A673 (cell line): ENCODE measurements at regions of chr17 and their contacts with region 1.

Region 1: DNA sequence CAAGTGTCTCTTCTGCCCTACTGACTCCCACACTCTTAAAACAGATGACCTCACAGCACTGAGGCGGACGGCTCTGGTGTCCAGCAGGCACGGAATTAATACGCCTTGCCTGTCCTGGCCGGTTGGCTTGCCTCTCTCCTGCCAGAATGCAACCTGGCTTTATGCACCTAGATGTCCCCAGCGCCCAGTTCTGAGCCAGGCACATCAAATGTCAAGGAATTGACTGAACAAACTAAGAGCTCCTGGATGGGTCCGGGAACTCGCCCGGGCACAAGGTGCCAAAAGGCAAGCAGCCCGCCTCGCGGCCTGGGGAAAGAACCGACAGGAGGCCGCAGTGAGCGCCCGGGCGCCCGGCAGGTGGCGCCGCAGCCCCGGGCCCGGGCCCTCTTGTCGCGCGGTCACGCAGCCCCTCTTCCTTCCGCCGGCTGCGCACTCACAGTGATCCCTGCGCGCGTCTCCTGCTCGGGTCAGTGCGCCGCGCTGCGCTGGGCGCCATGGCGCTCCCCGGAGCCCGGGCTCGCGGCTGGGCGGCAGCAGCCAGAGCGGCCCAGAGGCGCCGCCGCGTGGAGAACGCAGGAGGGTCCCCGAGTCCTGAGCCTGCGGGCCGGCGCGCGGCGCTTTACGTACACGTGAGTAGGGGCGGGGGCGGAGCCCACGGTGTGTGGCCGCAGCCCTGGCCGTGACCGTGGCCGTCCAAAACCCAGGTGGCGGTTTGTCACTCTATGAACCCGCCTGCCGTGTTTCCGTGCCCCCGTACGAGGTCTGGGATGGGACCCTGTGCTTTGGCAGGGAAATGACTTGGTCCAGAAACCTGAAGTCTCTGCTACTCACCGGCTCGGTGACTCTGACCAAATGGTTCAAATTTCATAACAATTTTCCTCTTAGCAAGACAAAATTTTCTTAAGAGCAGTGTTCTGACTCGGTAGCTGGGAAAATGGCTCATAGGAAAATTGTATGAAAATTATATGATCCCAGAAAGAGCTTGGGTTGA is at the start of gene RSAD1:
- DNase-seq: peak; percentile 94
- H3K4me3 ChIP-seq: peak within 1 kb of the TSS; percentile 65
- H3K27ac ChIP-seq: peak within 1 kb of the TSS; percentile 71
- H3K4me1 ChIP-seq: peaks cover 8% of the 10 kb centered on the region
- H3K27me3 ChIP-seq: no peaks in the 10 kb centered on the region
- CTCF ChIP-seq: peak; percentile 67
- total RNA-seq, gene RSAD1: 44.3 and 48.4 TPM in 2 replicates

Region 2: DNA sequence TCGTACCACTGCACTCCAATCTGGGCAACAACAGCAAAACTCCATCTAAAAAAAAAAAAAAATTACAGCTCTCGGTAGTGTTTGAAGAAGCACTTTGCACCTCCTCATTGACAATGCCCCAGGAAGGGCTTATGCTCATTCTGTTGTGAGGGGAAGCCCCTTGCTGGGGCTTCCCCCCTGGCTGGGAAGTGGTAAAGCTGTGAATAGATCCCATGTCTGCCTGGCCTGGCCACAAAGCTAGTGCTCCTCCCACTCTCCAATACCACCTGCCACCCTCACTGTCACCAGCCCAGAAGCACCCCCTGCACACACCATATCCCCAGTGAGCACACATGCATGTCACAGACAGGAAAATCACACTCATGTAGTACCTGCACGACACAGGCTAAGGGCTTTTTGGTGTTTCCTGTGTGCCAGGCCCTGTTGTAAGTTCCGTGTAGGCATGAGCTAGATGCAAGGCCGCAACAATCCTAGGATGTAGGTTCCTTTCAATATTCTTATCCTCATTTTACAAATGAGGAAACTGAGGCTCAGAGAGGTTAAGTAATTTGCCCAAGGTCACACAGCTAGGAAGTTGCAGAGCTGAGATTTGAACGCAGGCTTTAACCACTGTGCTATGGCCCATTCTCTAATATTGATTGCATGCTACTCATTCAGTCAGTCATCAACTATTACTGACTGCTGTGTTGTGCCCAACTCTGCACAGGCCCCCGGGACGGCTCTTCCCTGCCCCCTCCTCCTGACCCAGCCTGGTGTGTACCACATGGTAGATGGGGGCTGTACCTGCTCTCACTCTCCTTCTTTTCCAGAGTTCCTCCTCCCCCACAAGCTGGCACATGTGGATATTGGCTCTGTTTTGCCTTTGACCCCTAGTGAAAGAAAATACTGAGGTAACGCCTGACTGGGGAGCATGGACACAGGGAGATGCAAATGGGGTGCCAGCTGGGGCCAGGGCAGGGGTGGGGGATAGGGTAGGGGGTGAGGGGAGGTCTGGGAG is 265.4 kb before region 1 on chr17:
- CTCF ChIA-PET with region 1: no interaction called
- POLR2A ChIA-PET with region 1: no interaction called
- intact Hi-C with region 1: no loop called
- DNase-seq: peak; percentile 49
- H3K4me3 ChIP-seq: no peak overlapping the region
- H3K27ac ChIP-seq: no peak overlapping the region
- H3K4me1 ChIP-seq: peaks cover 23% of the 10 kb centered on the region
- H3K27me3 ChIP-seq: no peaks in the 10 kb centered on the region
- CTCF ChIP-seq: peak; percentile 39

Region 3: GRCh38 chr17:50252781-50253180 is 225.9 kb before region 1 on chr17:
- CTCF ChIA-PET with region 1: no interaction called
- POLR2A ChIA-PET with region 1: no interaction called
- intact Hi-C with region 1: no loop called
- DNase-seq: no peak
- H3K4me3 ChIP-seq: no peak overlapping the region
- H3K27ac ChIP-seq: no peak overlapping the region
- H3K4me1 ChIP-seq: no peaks in the 10 kb centered on the region
- H3K27me3 ChIP-seq: no peaks in the 10 kb centered on the region
- CTCF ChIP-seq: no peak

Region 4: GRCh38 chr17:50372758-50373556 is 105.7 kb before region 1 on chr17 and contains the starts of genes EME1 and MRPL27:
- CTCF ChIA-PET with region 1: no interaction called
- POLR2A ChIA-PET with region 1: no interaction called
- intact Hi-C with region 1: loop called (anchors 10 kb)
- DNase-seq: peak; percentile 94
- H3K4me3 ChIP-seq: peak within 1 kb of the TSS; percentile 77
- H3K27ac ChIP-seq: peak within 1 kb of the TSS; percentile 96
- H3K4me1 ChIP-seq: peaks cover 5% of the 10 kb centered on the region
- H3K27me3 ChIP-seq: no peaks in the 10 kb centered on the region
- CTCF ChIP-seq: no peak
- total RNA-seq, gene EME1: 31.9 and 44.0 TPM in 2 replicates
- total RNA-seq, gene MRPL27: 85.6 and 89.4 TPM in 2 replicates

Region 5: DNA sequence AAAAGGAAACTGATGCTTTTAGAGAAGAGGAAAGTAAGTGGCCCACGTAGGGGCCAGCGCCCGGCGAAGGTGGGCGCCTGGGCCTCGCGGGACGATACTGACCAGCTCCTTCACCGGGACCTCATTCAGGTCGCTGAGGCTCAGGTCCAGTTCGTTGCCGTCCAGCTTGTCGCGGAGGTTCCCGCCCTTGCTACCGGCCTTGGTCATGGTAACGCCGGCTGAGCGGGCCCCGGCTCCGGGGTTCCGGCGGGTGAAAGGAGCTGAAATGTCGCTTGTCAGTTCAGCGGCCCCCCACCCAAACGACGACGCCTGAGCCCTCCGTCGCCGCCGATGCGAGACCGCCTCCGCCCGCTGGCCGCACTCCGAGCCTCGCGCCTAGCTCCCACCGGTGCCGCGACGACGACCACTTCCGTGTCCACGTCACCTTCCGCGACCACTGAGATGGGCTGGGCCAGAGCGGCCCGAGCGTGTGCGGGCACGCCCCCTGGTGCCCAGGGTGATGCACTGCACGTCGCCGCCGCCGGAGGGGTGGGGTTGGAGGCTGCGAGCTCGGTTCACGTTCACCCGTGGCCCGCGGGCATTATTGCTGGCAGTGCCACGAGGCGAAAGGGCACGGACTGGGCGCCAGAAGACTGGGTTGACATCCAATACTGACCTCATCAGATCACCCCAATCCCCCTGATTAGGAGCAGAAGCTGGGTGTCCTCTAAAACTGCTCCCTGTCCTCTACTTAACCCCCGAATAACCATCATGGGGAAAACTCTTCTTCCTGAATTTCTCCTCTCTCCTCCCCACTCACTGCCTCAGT is 81.4 kb before region 1 on chr17 and contains the start of gene LRRC59:
- CTCF ChIA-PET with region 1: interaction called, 12 read pairs
- POLR2A ChIA-PET with region 1: no interaction called
- intact Hi-C with region 1: no loop called
- DNase-seq: peak; percentile 86
- H3K4me3 ChIP-seq: peak within 1 kb of the TSS; percentile 82
- H3K27ac ChIP-seq: peak within 1 kb of the TSS; percentile 83
- H3K4me1 ChIP-seq: peaks cover 10% of the 10 kb centered on the region
- H3K27me3 ChIP-seq: no peaks in the 10 kb centered on the region
- CTCF ChIP-seq: peak; percentile 99
- total RNA-seq, gene LRRC59: 177 and 178 TPM in 2 replicates

Region 6: GRCh38 chr17:50458701-50459676 is 19.7 kb before region 1 on chr17:
- CTCF ChIA-PET with region 1: interaction called, 12 read pairs
- POLR2A ChIA-PET with region 1: no interaction called
- intact Hi-C with region 1: no loop called
- DNase-seq: no peak
- H3K4me3 ChIP-seq: no peak overlapping the region
- H3K27ac ChIP-seq: no peak overlapping the region
- H3K4me1 ChIP-seq: peaks cover 9% of the 10 kb centered on the region
- H3K27me3 ChIP-seq: no peaks in the 10 kb centered on the region
- CTCF ChIP-seq: no peak

Region 7: DNA sequence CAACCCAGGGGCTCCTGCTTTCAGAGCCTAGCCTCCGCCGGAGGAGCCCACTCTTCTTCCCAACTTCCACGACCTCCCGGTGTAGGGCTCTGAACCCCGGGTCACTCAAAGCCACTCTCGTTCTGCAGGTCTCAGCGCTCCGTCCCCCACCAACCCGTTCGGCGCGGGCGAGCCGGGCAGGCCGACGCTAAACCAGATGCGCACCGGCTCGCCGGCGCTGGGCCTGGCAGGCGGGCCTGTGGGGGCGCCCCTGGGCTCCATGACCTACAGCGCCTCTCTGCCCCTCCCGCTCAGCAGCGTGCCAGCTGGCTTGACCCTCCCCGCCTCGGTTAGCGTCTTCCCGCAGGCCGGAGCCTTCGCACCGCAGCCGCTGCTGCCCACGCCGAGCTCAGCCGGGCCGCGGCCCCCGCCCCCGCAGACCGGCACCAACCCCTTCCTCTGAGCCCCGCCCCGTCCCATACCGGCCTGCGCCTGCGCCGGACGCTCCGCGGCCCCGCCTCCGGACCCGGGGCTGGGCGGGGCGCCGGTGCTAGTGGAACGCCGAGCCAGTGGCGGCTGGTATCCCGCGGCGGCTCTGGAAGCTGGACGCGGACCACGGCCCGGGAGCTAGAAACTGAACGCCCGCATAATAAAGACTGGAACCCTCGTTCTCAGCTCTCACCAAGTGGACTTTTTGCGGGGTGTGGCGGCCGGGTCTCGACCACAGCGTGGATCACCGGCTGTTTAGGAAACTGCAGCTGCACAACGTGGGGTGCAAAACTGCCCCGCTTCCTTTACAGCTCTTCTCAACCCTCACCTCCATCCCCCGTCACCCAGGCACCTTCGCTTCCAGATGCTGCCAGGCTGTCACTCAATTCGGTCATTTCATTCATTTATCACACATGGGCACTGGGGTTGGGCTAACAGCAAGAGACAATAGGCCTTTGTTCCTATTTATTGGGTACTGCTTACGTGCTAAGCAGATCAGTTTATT is 63.3 kb after region 1 on chr17:
- CTCF ChIA-PET with region 1: interaction called, 3 read pairs
- POLR2A ChIA-PET with region 1: no interaction called
- intact Hi-C with region 1: loop called (anchors 5 kb)
- DNase-seq: peak; percentile 88
- H3K4me3 ChIP-seq: peak overlapping the region; percentile 58
- H3K27ac ChIP-seq: peak overlapping the region; percentile 56
- H3K4me1 ChIP-seq: peaks cover 15% of the 10 kb centered on the region
- H3K27me3 ChIP-seq: no peaks in the 10 kb centered on the region
- CTCF ChIP-seq: peak; percentile 39; the same call in 1 of the 2 replicates

Region 8: DNA sequence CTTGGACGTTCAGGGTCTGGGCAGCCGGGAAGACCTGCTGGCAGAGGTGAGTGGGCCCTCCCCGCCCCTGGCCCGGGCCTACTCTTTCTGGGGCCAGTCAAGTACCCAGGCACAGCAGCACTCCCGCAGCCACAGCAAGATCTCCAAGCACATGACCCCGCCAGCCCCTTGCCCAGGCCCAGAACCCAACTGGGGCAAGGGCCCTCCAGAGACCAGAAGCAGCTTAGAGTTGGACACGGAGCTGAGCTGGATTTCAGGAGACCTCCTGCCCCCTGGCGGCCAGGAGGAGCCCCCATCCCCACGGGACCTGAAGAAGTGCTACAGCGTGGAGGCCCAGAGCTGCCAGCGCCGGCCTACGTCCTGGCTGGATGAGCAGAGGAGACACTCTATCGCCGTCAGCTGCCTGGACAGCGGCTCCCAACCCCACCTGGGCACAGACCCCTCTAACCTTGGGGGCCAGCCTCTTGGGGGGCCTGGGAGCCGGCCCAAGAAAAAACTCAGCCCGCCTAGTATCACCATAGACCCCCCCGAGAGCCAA is 147.4 kb after region 1 on chr17:
- CTCF ChIA-PET with region 1: interaction called, 3 read pairs
- POLR2A ChIA-PET with region 1: no interaction called
- intact Hi-C with region 1: loop called (anchors 2 kb)
- DNase-seq: peak; percentile 81
- H3K4me3 ChIP-seq: no peak overlapping the region
- H3K27ac ChIP-seq: no peak overlapping the region
- H3K4me1 ChIP-seq: peaks cover 22% of the 10 kb centered on the region
- H3K27me3 ChIP-seq: no peaks in the 10 kb centered on the region
- CTCF ChIP-seq: peak; percentile 76

Region 9: DNA sequence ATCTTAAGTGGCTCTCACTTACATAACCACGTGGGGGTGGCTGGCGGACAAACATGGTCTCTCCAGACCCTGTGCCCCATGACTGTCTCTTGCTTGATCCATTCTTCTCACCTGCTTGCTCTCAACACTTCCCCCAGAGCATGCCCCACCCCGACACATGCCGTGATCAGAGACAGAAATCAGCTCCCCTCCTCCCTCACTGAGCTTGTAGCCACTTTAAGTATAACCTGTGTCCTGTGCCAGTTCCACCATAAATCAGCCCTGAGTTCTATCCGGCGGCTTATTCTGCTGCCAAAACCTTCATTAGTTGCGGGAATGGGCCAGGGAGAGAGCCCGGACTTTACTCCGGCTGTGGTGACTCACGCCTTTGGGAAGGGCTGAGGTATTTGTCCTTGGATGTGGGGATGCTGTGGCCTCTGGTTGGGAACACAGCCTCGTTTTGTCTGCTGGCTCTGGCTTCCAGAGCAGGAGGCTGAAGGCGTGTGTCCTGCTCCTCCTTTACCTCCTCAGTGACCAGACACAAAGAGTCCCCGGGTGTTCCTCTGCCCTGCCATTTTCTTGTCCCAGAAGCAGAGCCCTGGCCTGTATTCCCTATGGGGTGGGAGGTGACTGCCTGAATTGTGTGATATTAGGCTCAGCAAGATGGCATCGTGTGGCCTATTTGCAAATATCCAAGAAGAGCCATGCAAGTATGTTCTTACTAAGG is 208.0 kb after region 1 on chr17:
- CTCF ChIA-PET with region 1: no interaction called
- POLR2A ChIA-PET with region 1: no interaction called
- intact Hi-C with region 1: no loop called
- DNase-seq: no peak
- H3K4me3 ChIP-seq: no peak overlapping the region
- H3K27ac ChIP-seq: no peak overlapping the region
- H3K4me1 ChIP-seq: peaks cover under 1% of the 10 kb centered on the region
- H3K27me3 ChIP-seq: no peaks in the 10 kb centered on the region
- CTCF ChIP-seq: no peak

Region 10: GRCh38 chr17:50731575-50732460 is 253.1 kb after region 1 on chr17:
- CTCF ChIA-PET with region 1: no interaction called
- POLR2A ChIA-PET with region 1: no interaction called
- intact Hi-C with region 1: no loop called
- DNase-seq: no peak
- H3K4me3 ChIP-seq: no peak overlapping the region
- H3K27ac ChIP-seq: no peak overlapping the region
- H3K4me1 ChIP-seq: no peaks in the 10 kb centered on the region
- H3K27me3 ChIP-seq: no peaks in the 10 kb centered on the region
- CTCF ChIP-seq: no peak